PC-3 (cell line): ENCODE measurements at regions of chr2 and their contacts with region 1.

Region 1: DNA sequence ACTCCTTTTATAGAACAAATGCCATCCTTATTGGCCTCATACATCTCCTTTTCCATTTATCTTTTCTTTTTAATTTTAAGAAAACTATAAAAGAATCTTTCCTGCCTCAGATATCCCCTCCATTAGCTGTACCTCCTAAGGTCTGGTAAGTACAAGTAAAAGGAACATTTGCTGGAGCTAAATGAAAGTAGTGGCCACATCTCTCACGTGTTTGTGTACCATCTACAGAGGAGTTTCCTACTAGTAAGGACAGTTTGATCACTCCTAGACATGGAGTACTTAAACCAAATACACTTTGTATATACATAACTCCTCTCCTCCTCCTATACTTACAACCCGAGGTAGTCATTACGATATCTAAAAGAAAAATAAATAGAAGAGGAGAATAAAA is 504.8 kb downstream of the LRRTM4 start:
- DNase-seq: no peak
- ATAC-seq: no peak
- H3K4me3 ChIP-seq: no peak overlapping the region
- H3K27ac ChIP-seq: no peak overlapping the region
- H3K4me1 ChIP-seq: no peaks in the 10 kb centered on the region
- H3K27me3 ChIP-seq: no peaks in the 10 kb centered on the region
- CTCF ChIP-seq: no peak

Region 2: GRCh38 chr2:76749858-76750257 is 267.5 kb before region 1 on chr2:
- CTCF ChIA-PET with region 1: no interaction called
- POLR2A ChIA-PET with region 1: no interaction called
- intact Hi-C with region 1: no loop called
- DNase-seq: peak; percentile 1
- ATAC-seq: no peak
- H3K4me3 ChIP-seq: no peak overlapping the region
- H3K27ac ChIP-seq: no peak overlapping the region
- H3K4me1 ChIP-seq: no peaks in the 10 kb centered on the region
- H3K27me3 ChIP-seq: no peaks in the 10 kb centered on the region
- CTCF ChIP-seq: no peak

Region 3: DNA sequence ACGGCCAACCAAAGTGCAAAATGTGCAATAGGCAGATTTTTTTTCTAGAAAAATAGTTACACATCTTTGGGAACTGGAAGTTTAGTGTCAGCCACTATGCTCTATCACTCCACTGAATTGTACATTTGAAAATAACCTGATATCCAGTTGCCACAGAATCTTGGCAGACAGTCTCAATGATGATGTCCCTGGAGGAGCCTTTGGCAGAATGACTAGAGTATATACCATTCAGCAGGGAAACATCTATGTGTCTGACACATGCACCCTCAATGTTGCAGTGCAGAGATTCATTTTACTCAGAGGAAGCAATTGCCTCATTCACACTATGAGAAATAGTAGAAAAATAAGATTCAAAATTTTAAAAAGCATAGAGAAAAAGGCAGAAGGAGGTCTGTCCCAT is 29.0 kb after region 1 on chr2:
- CTCF ChIA-PET with region 1: no interaction called
- POLR2A ChIA-PET with region 1: interaction called, 10 read pairs
- intact Hi-C with region 1: no loop called
- DNase-seq: no peak
- ATAC-seq: no peak
- H3K4me3 ChIP-seq: no peak overlapping the region
- H3K27ac ChIP-seq: no peak overlapping the region
- H3K4me1 ChIP-seq: no peaks in the 10 kb centered on the region
- H3K27me3 ChIP-seq: no peaks in the 10 kb centered on the region
- CTCF ChIP-seq: no peak

Region 4: DNA sequence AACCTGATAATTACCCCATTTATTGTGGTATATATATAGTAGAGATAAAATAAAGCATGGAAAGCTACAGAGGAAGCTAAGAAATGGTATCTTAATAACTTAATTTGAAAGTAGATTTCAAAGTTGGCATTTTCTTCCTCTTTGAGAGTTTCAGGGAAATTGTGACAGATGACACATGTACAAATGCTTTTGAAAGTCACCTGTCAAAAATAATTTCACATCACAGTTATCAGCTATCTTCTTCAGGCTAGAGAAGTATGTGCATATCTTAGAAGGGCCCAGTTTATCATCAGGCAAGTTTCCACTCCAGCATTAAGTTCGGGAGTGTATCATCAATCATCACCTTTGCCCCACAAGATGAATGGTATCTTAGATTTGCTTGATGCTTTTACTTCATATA is 47.0 kb after region 1 on chr2:
- CTCF ChIA-PET with region 1: no interaction called
- POLR2A ChIA-PET with region 1: no interaction called
- intact Hi-C with region 1: no loop called
- DNase-seq: no peak
- ATAC-seq: no peak
- H3K4me3 ChIP-seq: no peak overlapping the region
- H3K27ac ChIP-seq: no peak overlapping the region
- H3K4me1 ChIP-seq: no peaks in the 10 kb centered on the region
- H3K27me3 ChIP-seq: no peaks in the 10 kb centered on the region
- CTCF ChIP-seq: no peak